Thyroid gland (tissue), 4 donors: ENCODE measurements at regions of chr20 and their contacts with region 1.

Region 1: GRCh38 chr20:25195014-25195961 is at the start of gene ENTPD6:
- DNase-seq: peak; percentile 89 to 91
- H3K4me3 ChIP-seq: peak within 1 kb of the TSS; percentile 83 to 90 (median 84)
- H3K27ac ChIP-seq: peak within 1 kb of the TSS; percentile 73 to 94 (median 90)
- H3K4me1 ChIP-seq: peaks cover 13 to 15% of the 10 kb centered on the region in 2 donors
- H3K27me3 ChIP-seq: no peaks in the 10 kb centered on the region
- CTCF ChIP-seq: peak in 3 of 6 experiments; percentile 17 to 27 (median 18)
- POLR2A ChIP-seq: peak; percentile 49 to 89
- total RNA-seq, gene ENTPD6: 51.6 to 75.6 (median 64.9) TPM

Region 2: GRCh38 chr20:25247956-25248785 is 52.9 kb after region 1 on chr20 and contains the start of gene PYGB:
- intact Hi-C with region 1: loop called (anchors 2 kb)
- DNase-seq: peak; percentile 72 to 77
- H3K4me3 ChIP-seq: peak within 1 kb of the TSS; percentile 73 to 96 (median 79)
- H3K27ac ChIP-seq: peak within 1 kb of the TSS; percentile 78 to 94 (median 81)
- H3K4me1 ChIP-seq: peaks cover 32 to 34% of the 10 kb centered on the region in 2 donors
- H3K27me3 ChIP-seq: no peaks in the 10 kb centered on the region
- CTCF ChIP-seq: no peak
- POLR2A ChIP-seq: peak; percentile 76 to 95
- total RNA-seq, gene PYGB: 83.2 to 141 (median 94.6) TPM

Region 3: DNA sequence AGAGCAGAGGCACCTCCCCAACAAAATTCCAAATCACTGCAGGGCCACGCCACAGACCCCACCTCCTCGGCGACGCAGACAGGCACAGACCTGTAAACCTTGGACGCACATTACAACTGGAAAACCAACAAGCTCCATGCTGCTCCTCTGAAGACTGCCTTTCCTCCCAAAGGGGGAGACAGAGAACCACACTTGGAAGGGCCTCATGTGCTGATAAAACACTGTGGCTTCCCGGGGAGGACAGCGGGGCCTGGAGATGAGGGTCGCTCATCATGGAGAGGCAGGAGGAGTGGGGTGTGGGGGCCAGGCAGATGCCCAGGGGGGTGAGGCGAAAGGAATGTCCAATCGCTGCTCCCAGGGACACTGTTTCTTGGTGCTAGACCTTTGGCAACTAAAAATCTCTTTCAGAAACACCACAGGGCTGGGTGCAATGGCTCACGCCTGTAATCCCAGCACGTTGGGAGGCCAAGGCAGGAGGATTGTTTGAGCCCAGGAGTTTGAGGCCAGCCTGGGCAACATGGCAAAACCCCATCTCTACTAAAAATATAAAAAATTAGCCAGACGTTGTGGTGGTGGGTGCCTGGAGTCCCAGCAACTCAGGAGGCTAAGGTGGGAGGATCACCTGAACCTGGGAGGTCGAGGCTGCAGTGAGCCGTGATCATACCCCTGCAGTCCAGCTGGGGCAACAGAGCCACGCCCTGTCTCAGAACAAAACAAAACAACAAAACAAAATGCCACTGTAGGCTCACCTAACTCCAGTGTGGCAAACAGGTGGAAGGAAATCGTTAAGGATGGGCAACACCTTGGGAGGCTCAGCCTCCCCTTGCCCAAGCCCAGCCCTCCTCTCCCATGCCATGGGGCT is 141.5 kb after region 1 on chr20:
- intact Hi-C with region 1: no loop called
- DNase-seq: peak; percentile 20 to 24
- H3K4me3 ChIP-seq: no peak overlapping the region
- H3K27ac ChIP-seq: peak overlapping the region in 1 of 3 donors; percentile 21
- H3K4me1 ChIP-seq: peaks cover 29 to 32% of the 10 kb centered on the region in 2 donors
- H3K27me3 ChIP-seq: no peaks in the 10 kb centered on the region
- CTCF ChIP-seq: peak in 3 of 6 experiments; percentile 38 to 42 (median 42)
- POLR2A ChIP-seq: no peak

Region 4: DNA sequence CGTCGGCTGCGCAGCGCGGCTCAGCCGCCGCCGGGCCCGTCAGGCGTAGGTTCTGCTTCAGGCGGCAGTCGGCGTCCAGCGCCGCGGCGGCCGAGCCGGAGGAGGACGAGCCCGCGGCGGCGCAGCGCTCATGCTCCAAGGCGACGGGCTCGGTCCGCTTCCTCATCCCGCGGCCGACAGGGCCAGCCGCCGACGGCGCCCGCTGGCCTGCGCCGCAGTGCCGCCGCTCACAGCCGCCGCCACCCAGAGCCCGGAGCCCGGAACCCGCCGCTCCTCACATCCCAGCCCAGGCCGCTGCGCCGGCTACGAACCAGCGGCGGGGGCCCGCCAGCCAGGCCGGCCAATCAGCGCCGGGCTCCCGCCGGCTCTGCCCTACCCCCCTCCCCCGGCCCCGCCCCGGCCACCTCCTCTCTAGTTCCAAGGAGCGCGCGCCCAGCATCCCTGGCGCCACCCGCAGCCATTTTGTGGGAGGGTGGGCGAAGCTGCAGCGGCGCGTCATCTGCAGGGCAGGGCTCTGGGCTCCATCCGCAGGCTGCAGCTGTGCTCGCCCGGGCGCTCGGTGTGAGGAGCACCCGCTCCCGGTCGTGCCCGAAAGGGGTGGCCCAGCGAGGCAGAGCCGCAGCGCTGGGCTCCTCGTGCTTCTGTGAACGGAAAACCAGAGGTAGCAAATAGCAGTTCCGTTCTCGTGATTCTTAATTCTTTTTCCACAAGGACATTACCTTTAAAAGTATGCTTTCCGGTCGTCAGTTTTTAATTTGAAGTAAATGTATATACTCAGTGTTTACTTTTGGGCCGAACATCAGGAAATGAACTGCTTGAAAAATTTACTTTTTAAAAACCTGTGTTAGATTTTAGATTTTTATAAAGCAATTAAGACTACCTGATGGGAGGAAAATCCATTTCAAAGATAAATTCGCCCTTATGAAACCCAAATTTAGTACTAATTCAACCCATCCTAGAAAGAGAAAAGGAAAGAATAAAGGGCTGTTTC is 195.5 kb after region 1 on chr20 and contains the start of gene ABHD12:
- intact Hi-C with region 1: loop called (anchors 10 kb)
- DNase-seq: peak; percentile 97 to 98
- H3K4me3 ChIP-seq: peak within 1 kb of the TSS; percentile 49 to 85 (median 80)
- H3K27ac ChIP-seq: peak within 1 kb of the TSS; percentile 86 to 92 (median 90)
- H3K4me1 ChIP-seq: peaks cover 19 to 24% of the 10 kb centered on the region in 2 donors
- H3K27me3 ChIP-seq: no peaks in the 10 kb centered on the region
- CTCF ChIP-seq: peak in 1 of 6 experiments; percentile 3
- POLR2A ChIP-seq: peak; percentile 72 to 94
- total RNA-seq, gene ABHD12: 103 to 212 (median 179) TPM